Activated CD4-positive, alpha-beta memory T cell treated with anti-CD3 and anti-CD28 coated beads for 36 hours (primary cell): ENCODE measurements at regions of chr1 and their contacts with region 1.

Region 1: GRCh38 chr1:26417111-26417759 is 6.6 kb downstream of the LIN28A start:
- DNase-seq: peak; percentile 89
- H3K4me3 Mint-ChIP-seq: no peak overlapping the region
- H3K27ac Mint-ChIP-seq: no peak overlapping the region
- H3K4me1 Mint-ChIP-seq: peaks cover 2% of the 10 kb centered on the region
- H3K27me3 Mint-ChIP-seq: peaks cover 15% of the 10 kb centered on the region

Region 2: GRCh38 chr1:26102526-26102925 is 314.7 kb before region 1 on chr1:
- CTCF ChIA-PET with region 1: interaction called, 23 read pairs
- POLR2A ChIA-PET with region 1: no interaction called
- intact Hi-C with region 1: loop called (anchors 10 kb)
- DNase-seq: no peak
- H3K4me3 Mint-ChIP-seq: no peak overlapping the region
- H3K27ac Mint-ChIP-seq: no peak overlapping the region
- H3K4me1 Mint-ChIP-seq: peaks cover 7% of the 10 kb centered on the region
- H3K27me3 Mint-ChIP-seq: no peaks in the 10 kb centered on the region

Region 3: GRCh38 chr1:26233903-26234643 is 183.2 kb before region 1 on chr1 and contains the start of gene CEP85:
- CTCF ChIA-PET with region 1: interaction called, 17 read pairs
- POLR2A ChIA-PET with region 1: no interaction called
- intact Hi-C with region 1: no loop called
- DNase-seq: peak; percentile 99
- H3K4me3 Mint-ChIP-seq: peak within 1 kb of the TSS; percentile 96
- H3K27ac Mint-ChIP-seq: peak within 1 kb of the TSS; percentile 86
- H3K4me1 Mint-ChIP-seq: peaks cover 36% of the 10 kb centered on the region
- H3K27me3 Mint-ChIP-seq: no peaks in the 10 kb centered on the region
- total RNA-seq, gene CEP85: 30.3 to 32.6 TPM

Region 4: DNA sequence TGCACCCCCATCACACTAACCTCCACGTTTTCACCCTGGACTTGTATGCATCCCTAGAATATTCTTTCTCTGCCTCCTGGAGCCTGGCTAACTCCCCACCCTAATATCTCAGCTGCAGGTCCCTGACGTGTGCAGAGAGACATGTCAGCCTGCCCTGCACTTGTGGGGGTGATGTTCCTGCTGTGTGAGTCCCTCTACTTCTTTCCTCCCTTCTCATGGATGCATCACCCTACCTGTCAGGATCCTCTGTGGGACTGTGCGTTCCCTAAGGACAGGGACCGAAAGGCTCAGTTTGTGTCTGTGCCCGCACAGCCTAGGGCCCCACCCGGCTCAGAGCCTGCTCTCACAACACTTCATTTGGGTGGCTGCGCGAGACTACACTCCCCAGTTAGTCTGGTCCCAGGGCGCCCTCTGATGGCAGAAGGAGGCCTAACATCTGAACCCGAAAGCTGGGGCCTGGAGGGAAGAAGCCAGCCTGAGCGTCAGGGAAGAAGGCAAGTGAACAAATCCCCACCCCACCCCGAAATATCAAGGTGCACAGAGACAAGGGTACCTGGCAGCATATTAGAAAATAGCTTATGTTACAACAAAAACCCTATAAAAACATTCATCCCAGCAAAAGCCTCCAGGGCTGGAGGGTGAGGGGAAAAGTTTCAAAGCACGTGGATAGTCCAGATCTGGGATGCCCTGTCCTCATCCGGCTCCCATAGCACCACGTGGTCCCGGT is 95.8 kb before region 1 on chr1:
- CTCF ChIA-PET with region 1: interaction called, 23 read pairs
- POLR2A ChIA-PET with region 1: no interaction called
- intact Hi-C with region 1: no loop called
- DNase-seq: peak; percentile 97
- H3K4me3 Mint-ChIP-seq: peak overlapping the region; percentile 77
- H3K27ac Mint-ChIP-seq: peak overlapping the region; percentile 91
- H3K4me1 Mint-ChIP-seq: peaks cover 34% of the 10 kb centered on the region
- H3K27me3 Mint-ChIP-seq: no peaks in the 10 kb centered on the region

Region 5: GRCh38 chr1:26372039-26372438 is 45.2 kb before region 1 on chr1:
- CTCF ChIA-PET with region 1: interaction called, 20 read pairs
- POLR2A ChIA-PET with region 1: no interaction called
- intact Hi-C with region 1: no loop called
- DNase-seq: no peak
- H3K4me3 Mint-ChIP-seq: no peak overlapping the region
- H3K27ac Mint-ChIP-seq: no peak overlapping the region
- H3K4me1 Mint-ChIP-seq: peaks cover 72% of the 10 kb centered on the region
- H3K27me3 Mint-ChIP-seq: no peaks in the 10 kb centered on the region

Region 6: DNA sequence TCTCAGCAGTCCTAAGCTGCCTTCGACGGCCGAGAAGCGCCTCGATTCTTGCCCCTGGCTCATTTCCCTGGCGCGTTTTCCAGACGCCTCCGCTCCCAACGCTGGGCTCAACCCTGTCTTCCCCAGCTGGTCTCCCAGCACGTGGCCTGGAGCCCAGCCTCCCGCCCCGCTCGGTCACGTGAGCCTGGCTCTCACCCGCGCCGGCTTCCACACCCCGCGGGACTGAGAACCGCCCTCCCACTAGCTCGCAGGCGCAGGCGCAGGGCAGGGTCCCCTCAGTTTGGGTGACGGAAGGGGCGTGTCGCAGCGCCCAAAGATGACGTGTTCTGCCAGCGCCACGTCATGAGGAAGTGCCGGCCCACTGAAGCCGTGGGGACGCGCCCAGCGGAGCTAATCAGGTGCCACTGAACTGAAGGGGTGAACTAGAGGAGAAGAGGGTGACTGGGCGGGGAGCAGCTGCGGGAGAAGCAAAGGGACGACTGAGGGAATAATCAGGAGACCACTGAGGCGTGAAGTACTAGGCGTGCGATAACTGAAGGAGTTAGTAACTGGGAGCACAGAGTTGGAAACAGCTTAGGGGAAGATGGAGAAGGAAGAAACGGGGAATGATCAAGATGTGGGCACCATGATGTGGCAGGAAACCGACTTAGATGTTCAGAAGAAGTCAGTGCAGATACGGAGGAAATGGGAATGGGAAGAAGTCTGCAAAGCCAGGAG is 14.9 kb after region 1 on chr1 and contains the start of gene DHDDS:
- CTCF ChIA-PET with region 1: interaction called, 32 read pairs
- POLR2A ChIA-PET with region 1: no interaction called
- intact Hi-C with region 1: no loop called
- DNase-seq: peak; percentile 99
- H3K4me3 Mint-ChIP-seq: peak within 1 kb of the TSS; percentile 91
- H3K27ac Mint-ChIP-seq: peak within 1 kb of the TSS; percentile 80
- H3K4me1 Mint-ChIP-seq: peaks cover 23% of the 10 kb centered on the region
- H3K27me3 Mint-ChIP-seq: no peaks in the 10 kb centered on the region
- total RNA-seq, gene DHDDS: 41.9 to 45.5 TPM